Activated CD4-positive, alpha-beta memory T cell treated with anti-CD3 and anti-CD28 coated beads for 36 hours (primary cell): ENCODE measurements at regions of chr7 and their contacts with region 1.

Region 1: GRCh38 chr7:92682903-92683539 is 92.8 kb upstream of the FAM133B start:
- DNase-seq: peak; percentile 20
- H3K4me3 Mint-ChIP-seq: no peak overlapping the region
- H3K27ac Mint-ChIP-seq: peak overlapping the region; percentile 87
- H3K4me1 Mint-ChIP-seq: peaks cover 85% of the 10 kb centered on the region
- H3K27me3 Mint-ChIP-seq: no peaks in the 10 kb centered on the region

Region 2: DNA sequence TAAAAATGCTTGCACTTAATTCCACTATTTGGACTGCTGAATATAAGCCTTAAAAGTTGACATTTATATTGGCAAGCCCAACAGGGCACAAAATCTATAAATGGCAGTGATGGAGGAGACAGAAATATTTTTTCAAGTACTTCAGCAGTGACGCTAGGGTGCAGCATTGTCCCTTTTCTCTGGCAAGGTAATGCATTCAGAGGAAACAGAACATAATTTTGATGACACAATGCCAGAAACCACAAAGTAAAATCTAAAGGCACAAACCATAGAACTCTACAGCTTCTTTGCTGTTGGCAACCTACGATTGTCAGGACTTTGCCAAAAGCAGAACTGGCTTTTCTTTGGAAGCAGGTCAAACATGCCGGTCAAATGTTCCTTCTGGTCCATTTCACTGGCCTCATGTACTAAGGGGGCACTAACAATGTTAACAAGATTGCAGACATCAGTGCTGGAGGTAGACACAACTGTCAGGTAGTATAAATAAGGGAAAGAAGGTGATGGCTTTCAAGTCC is 61.9 kb before region 1 on chr7:
- CTCF ChIA-PET with region 1: no interaction called
- POLR2A ChIA-PET with region 1: no interaction called
- intact Hi-C with region 1: loop called (anchors 1 kb)
- DNase-seq: peak; percentile 86
- H3K4me3 Mint-ChIP-seq: peak overlapping the region; percentile 49
- H3K27ac Mint-ChIP-seq: peak overlapping the region; percentile 93
- H3K4me1 Mint-ChIP-seq: peaks cover 53% of the 10 kb centered on the region
- H3K27me3 Mint-ChIP-seq: no peaks in the 10 kb centered on the region

Region 3: DNA sequence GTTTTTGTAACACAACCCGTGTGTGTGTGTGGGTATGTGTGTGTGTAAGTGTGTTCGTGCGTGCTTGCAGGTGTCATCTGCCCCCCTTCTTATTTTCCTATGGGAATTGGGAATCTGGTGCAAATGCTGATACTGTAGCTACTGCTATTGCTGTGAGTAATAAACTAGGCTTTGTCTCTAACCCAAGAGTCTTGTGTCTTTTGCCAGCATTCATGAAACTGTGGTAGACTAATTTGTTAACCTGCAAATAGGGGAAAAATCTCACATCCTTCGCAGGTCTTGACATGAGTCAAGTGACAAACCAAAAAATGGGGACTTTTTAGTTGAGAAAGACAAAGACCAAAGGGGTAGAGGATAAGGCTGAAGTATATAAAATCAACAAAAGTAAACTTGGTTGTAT is 35.0 kb before region 1 on chr7:
- CTCF ChIA-PET with region 1: no interaction called
- POLR2A ChIA-PET with region 1: no interaction called
- intact Hi-C with region 1: loop called (anchors 1 kb)
- DNase-seq: no peak
- H3K4me3 Mint-ChIP-seq: peak overlapping the region; percentile 16
- H3K27ac Mint-ChIP-seq: peak overlapping the region; percentile 96
- H3K4me1 Mint-ChIP-seq: peaks cover 91% of the 10 kb centered on the region
- H3K27me3 Mint-ChIP-seq: no peaks in the 10 kb centered on the region

Region 4: DNA sequence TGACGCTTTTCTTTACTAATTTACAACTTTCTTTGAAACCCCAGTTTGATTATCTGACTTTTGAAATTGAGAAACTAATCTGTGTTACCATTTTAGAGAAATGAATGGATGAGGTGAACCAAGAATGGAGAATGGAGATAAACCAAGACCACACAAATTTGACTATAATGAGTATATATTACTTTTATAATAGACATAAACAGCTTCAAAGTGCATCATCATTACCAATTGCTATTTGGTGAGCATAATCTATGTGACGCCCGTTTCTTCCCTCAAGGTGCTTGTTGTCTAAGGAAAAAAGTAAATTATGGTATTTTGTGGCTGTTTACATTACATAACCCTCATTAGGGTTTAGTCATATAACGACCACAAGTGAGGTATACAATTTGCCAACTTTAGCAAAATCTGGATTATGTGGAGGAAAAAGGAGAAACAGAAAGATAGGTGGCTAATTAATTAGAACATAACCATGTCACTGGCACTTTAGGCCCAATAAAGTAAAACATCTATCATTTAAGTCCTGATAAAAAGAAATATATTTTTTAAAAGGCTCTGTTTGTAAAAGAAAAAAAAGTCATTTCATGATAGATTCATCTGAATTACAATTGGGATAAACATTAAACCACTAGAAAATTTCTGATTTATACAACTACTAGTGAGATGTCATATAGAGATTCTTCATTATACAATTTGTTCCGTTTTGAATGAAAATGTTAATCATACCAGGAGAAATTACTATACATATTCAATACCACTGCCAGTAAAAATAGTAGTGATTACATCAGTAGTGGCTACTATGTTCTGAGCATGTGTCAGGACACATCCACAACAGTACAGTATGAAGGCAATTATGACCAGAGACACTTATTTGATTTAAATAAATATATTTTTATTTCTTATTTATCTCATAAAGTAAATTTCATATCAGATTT is 25.4 kb after region 1 on chr7:
- CTCF ChIA-PET with region 1: no interaction called
- POLR2A ChIA-PET with region 1: no interaction called
- intact Hi-C with region 1: loop called (anchors 1 kb)
- DNase-seq: no peak
- H3K4me3 Mint-ChIP-seq: no peak overlapping the region
- H3K27ac Mint-ChIP-seq: peak overlapping the region; percentile 88
- H3K4me1 Mint-ChIP-seq: peaks cover 55% of the 10 kb centered on the region
- H3K27me3 Mint-ChIP-seq: no peaks in the 10 kb centered on the region

Region 5: GRCh38 chr7:93036807-93037206 is 353.8 kb after region 1 on chr7:
- CTCF ChIA-PET with region 1: no interaction called
- POLR2A ChIA-PET with region 1: no interaction called
- intact Hi-C with region 1: loop called (anchors 5 kb)
- DNase-seq: peak; percentile 64
- H3K4me3 Mint-ChIP-seq: no peak overlapping the region
- H3K27ac Mint-ChIP-seq: peak overlapping the region; percentile 53
- H3K4me1 Mint-ChIP-seq: peaks cover 22% of the 10 kb centered on the region
- H3K27me3 Mint-ChIP-seq: no peaks in the 10 kb centered on the region

Region 6: GRCh38 chr7:93315896-93316295 is 632.9 kb after region 1 on chr7:
- CTCF ChIA-PET with region 1: no interaction called
- POLR2A ChIA-PET with region 1: no interaction called
- intact Hi-C with region 1: no loop called
- DNase-seq: no peak
- H3K4me3 Mint-ChIP-seq: no peak overlapping the region
- H3K27ac Mint-ChIP-seq: no peak overlapping the region
- H3K4me1 Mint-ChIP-seq: peaks cover 8% of the 10 kb centered on the region
- H3K27me3 Mint-ChIP-seq: no peaks in the 10 kb centered on the region